ENCODE measurements at regions of chr17 and their contacts with region 1.

Region 1: DNA sequence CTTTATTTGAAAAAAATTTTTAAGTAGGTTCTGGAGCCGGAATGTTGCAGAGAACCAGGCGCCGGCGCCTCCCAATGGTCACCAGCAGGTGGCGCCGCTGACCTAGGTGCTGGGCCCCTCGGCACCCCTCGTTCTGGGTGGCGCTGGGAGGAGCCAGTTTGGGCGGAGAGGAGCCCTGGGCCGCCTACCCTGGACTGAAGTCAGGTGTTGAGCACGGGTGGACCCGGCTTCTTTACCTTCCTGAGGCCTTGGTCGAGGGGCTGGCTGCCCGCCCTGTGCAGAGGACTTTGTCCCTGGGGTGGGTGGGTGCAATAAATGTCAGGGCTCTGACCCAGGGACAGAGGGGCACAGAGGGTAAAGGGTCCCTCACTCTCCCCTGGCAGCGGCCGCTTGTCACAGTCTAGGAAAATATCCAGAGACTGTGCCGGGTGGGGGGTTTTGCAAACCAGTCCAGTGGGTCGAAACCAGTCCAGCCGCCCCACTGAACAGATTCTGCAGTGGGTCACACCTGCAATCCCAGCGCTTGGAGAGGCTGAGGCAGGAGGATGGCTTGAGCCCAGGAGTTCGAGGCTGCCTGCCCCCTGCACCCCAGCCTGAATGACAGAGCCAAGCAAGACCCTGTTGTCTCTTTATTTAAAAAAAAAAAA is 30.1 kb upstream of the TNFRSF13B start:
- DNase-seq: peak; percentile 77 to 93
- ATAC-seq: peak; percentile 84
- H3K4me3 ChIP-seq: no peak overlapping the region
- H3K27ac ChIP-seq: no peak overlapping the region
- H3K4me1 ChIP-seq: no peaks in the 10 kb centered on the region
- H3K27me3 ChIP-seq: no peaks in the 10 kb centered on the region

Region 2: GRCh38 chr17:17028059-17028877 is 26.3 kb after region 1 on chr17:
- intact Hi-C with region 1: no loop called
- DNase-seq: peak; percentile 70 to 85
- ATAC-seq: peak; percentile 47
- H3K4me3 ChIP-seq: no peak overlapping the region
- H3K27ac ChIP-seq: no peak overlapping the region
- H3K4me1 ChIP-seq: no peaks in the 10 kb centered on the region
- H3K27me3 ChIP-seq: no peaks in the 10 kb centered on the region

Region 3: DNA sequence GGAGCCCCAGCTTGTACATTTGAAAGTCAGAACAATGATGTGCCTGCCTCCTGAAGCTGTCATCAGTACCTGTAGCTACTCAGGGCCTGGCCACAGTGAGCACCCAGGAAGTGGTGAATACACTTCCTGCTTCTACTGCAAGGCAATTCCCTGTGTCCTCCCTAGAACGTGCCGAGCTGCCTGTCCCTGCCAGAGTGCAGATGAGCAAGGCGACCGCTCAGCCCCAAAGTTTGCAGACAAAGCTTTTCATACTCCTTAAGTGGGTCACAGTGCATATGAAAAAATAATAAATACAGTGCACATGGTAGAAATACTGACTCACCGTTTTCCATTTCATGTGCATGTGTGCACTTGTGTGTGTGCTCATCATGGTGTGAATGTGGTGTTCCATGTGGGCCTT is 117.5 kb after region 1 on chr17:
- intact Hi-C with region 1: loop called in 1 of 2 experiments (anchors 10 kb)
- DNase-seq: no peak
- ATAC-seq: peak; percentile 45
- H3K4me3 ChIP-seq: no peak overlapping the region
- H3K27ac ChIP-seq: no peak overlapping the region
- H3K4me1 ChIP-seq: peaks cover 0 to 8% of the 10 kb centered on the region in 2 donors
- H3K27me3 ChIP-seq: no peaks in the 10 kb centered on the region

Region 4: GRCh38 chr17:17141860-17142552 is 140.0 kb after region 1 on chr17:
- intact Hi-C with region 1: loop called in 1 of 2 experiments (anchors 5 kb)
- DNase-seq: no peak
- ATAC-seq: no peak
- H3K4me3 ChIP-seq: no peak overlapping the region
- H3K27ac ChIP-seq: no peak overlapping the region
- H3K4me1 ChIP-seq: no peaks in the 10 kb centered on the region
- H3K27me3 ChIP-seq: no peaks in the 10 kb centered on the region

Region 5: GRCh38 chr17:17206124-17206912 is 204.3 kb after region 1 on chr17 and contains the start of gene PLD6:
- intact Hi-C with region 1: loop called in 1 of 2 experiments (anchors 10 kb)
- DNase-seq: peak; percentile 77 to 93
- ATAC-seq: peak; percentile 81
- H3K4me3 ChIP-seq: peak within 1 kb of the TSS in 1 of 2 donors; percentile 18
- H3K27ac ChIP-seq: peak within 1 kb of the TSS; percentile 24 to 53
- H3K4me1 ChIP-seq: no peaks in the 10 kb centered on the region
- H3K27me3 ChIP-seq: no peaks in the 10 kb centered on the region
- total RNA-seq, gene PLD6: 1.3 to 1.8 TPM

Region 6: GRCh38 chr17:17237026-17237799 is 235.2 kb after region 1 on chr17 and contains the start of gene FLCN:
- intact Hi-C with region 1: loop called in 1 of 2 experiments (anchors 5 kb)
- DNase-seq: peak; percentile 96 to 98
- ATAC-seq: peak; percentile 98
- H3K4me3 ChIP-seq: peak within 1 kb of the TSS; percentile 83 to 86
- H3K27ac ChIP-seq: peak within 1 kb of the TSS in 1 of 2 donors; percentile 55
- H3K4me1 ChIP-seq: no peaks in the 10 kb centered on the region
- H3K27me3 ChIP-seq: no peaks in the 10 kb centered on the region
- total RNA-seq, gene FLCN: 53.4 to 81.8 TPM

Region 7: DNA sequence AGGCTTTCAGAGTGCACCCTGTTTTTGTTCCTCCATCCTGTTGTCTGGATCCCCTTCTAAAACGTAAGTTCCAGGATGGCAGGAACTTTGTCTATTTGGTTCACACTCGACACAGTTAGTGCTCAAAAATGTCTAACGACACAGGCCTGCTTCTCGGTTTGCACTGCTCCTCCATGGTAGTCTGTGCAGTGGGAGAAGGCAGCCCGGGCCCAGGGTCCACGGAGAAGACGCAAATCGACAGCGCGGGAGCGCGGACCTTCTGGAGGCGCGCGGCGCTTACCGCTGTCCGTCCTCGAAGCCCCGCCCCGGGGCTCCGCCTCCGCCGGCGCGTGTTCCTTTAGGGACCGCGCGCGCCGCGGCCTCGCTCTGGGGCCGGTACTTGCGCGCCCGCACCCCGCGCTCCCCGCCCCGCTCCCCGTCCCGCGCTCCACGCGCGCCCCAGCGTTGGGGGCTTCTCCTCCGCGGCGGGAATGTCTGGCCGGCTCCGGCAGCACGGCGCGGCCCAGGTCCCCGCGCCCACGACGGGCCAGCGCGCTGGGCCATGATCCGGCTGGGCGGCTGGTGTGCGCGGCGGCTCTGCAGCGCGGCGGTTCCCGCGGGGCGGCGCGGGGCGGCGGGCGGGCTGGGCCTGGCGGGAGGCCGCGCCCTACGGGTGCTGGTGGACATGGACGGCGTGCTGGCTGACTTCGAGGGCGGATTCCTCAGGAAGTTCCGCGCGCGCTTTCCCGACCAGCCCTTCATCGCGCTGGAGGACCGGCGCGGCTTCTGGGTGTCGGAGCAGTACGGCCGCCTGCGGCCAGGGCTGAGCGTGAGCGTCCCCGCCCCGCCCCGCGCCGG is 301.2 kb after region 1 on chr17 and contains the start of gene NT5M:
- intact Hi-C with region 1: loop called in 1 of 2 experiments (anchors 10 kb)
- DNase-seq: peak; percentile 81 to 90
- ATAC-seq: peak; percentile 92
- H3K4me3 ChIP-seq: peak within 1 kb of the TSS; percentile 62 to 79
- H3K27ac ChIP-seq: peak within 1 kb of the TSS in 1 of 2 donors; percentile 39
- H3K4me1 ChIP-seq: no peaks in the 10 kb centered on the region
- H3K27me3 ChIP-seq: no peaks in the 10 kb centered on the region
- total RNA-seq, gene NT5M: 1.2 to 2.2 TPM

Measured in aorta (tissue), 5 donors.